Activated CD4-positive, alpha-beta T cell treated with anti-CD3 and anti-CD28 coated beads, Interleukin-2, amount 10 ng/mL, durations not matched to agents 24 days and 14 days (primary cell): ENCODE measurements at regions of chr1 and their contacts with region 1.

Region 1: DNA sequence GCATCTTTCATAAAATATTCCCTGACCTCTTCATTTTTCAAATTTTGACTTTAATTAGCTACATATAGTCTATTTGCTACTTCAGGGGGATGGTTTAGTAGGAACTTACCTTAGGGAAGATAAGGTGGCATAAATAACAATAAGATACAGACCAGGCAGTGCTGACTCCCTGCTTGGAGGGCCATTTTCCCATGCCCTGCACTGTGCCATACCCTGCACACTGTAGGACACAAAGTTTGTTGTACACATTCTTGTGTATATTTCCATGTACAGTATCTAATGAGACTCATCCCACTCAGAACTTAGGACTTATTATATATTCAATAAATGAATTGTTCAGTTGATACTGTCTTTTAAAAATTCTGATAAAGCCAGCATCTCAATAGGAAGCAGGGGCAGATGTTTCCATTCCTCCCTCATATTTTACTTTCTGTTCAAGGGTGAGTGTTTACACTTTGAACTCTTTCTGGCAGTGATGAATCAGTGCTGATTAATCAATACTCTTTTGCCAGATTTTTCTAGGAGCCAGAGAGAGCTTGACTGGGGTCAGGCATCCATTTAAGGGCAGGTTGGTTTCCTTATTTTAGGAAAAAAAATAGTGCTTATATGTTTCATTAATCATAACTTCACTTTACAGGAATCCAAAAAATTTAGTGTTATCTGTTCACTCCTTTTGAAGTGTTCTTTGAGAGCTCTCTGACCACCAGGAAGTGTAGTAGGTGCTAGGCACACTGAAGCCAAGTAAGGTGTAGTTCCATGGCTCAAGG is 30.6 kb downstream of the MPZL1 start:
- DNase-seq: no peak
- H3K4me3 Mint-ChIP-seq: no peak overlapping the region
- H3K27ac Mint-ChIP-seq: peak overlapping the region; percentile 30
- H3K4me1 Mint-ChIP-seq: peaks cover 19% of the 10 kb centered on the region
- H3K27me3 Mint-ChIP-seq: no peaks in the 10 kb centered on the region

Region 2: DNA sequence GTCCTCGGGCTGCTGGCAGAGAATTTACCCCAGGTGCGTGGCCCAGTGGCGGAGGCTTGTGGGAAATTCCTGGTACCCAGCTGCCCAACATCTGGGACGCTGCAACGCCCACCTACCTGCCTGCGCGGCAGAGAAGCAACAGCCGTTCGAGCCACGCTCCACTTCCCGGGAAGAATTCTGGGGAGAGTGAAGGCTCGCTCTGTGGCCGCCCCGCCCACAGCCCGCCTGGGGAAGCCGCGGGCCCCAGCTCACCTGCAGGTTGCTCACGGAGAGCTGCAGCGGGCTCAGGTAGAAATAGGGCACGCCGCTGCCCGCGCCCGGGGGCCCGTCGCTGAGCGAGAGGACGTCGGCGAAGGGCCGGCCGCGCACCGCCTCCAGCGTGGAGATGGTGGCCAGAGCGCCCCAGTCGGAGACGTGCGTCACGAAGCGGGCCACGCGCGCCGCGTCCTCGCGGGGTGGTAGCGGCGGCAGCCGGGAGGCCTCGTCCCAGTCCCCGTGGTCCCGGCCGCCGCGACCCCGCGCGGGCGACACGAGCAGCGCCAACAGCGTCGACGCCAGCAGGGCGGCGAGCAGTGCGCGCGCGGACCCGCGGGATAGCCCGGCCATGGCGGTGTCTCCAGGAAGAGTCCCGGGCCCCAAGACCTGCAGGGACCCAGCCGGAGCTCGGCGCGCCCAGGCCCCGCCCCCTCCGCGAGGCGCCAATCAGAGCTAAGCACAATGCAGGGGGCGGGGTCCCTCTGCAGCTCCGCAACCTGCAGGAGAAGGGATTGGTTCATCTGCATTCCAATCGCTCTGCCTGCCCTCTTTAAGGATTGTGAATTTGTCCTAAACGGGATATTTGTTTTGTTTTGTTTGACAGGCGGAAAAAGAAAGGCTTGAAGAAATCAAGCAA is 199.0 kb before region 1 on chr1 and contains the start of gene CREG1:
- intact Hi-C with region 1: no loop called
- DNase-seq: peak; percentile 98
- H3K4me3 Mint-ChIP-seq: peak within 1 kb of the TSS; percentile 88
- H3K27ac Mint-ChIP-seq: no peak within 1 kb of the TSS
- H3K4me1 Mint-ChIP-seq: peaks cover 26% of the 10 kb centered on the region
- H3K27me3 Mint-ChIP-seq: peaks cover 6% of the 10 kb centered on the region
- total RNA-seq, gene CREG1: 12.3 and 13.6 TPM in 2 replicates

Region 3: GRCh38 chr1:167763525-167764220 is 11.3 kb after region 1 on chr1:
- intact Hi-C with region 1: loop called (anchors 1 kb)
- DNase-seq: no peak
- H3K4me3 Mint-ChIP-seq: no peak overlapping the region
- H3K27ac Mint-ChIP-seq: no peak overlapping the region
- H3K4me1 Mint-ChIP-seq: peaks cover 34% of the 10 kb centered on the region
- H3K27me3 Mint-ChIP-seq: no peaks in the 10 kb centered on the region

Region 4: DNA sequence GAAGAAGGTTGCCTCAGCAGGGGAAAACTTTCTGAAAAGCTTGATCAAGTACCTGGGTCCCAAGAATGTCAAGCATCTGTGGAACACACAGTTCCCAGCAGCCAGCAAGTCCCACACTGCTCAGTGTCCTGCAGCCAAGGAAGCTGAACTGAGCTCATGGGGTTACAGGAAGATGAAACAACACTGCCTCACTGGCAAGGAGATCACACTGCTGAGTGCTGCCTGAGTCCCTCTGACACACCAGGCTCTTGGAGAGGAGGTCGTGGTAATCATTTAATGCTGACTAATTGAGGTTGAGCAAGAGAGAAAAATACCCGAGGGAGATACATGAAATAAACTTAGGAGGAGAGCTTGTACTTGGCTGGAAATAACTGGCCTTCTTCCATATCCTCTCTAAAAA is 44.6 kb after region 1 on chr1:
- intact Hi-C with region 1: loop called (anchors 5 kb)
- DNase-seq: peak; percentile 67
- H3K4me3 Mint-ChIP-seq: no peak overlapping the region
- H3K27ac Mint-ChIP-seq: peak overlapping the region; percentile 14
- H3K4me1 Mint-ChIP-seq: peaks cover 15% of the 10 kb centered on the region
- H3K27me3 Mint-ChIP-seq: no peaks in the 10 kb centered on the region